Esophagus muscularis mucosa (tissue), 4 donors: ENCODE measurements at regions of chr10 and their contacts with region 1.

Region 1: DNA sequence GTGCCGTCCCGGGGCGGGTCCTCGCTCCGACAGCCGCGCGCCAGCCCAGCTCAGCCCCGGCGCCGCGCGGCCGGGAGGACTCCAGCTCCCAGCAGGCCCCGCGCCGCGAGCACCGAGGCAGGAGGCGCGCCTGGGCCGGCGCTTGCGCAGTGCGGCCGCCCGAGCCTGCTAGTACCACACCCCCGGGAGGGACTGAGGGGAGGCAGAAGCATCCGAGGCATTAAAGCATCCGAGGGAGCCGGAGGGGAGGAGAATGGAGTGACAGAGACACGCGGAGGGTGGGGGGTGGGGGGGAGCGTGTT is at the start of gene GRK5:
- DNase-seq: peak; percentile 97
- H3K4me3 ChIP-seq: peak within 1 kb of the TSS; percentile 74 to 95 (median 83)
- H3K27ac ChIP-seq: peak within 1 kb of the TSS; percentile 97 to 100 (median 98)
- H3K4me1 ChIP-seq: peaks cover 33 to 52% (median 50%) of the 10 kb centered on the region in 4 donors
- H3K27me3 ChIP-seq: no peaks in the 10 kb centered on the region
- CTCF ChIP-seq: no peak
- EP300 ChIP-seq: no peak
- POLR2A ChIP-seq: no peak
- total RNA-seq, gene GRK5: 39.6 to 64.4 (median 50.7) TPM

Region 2: GRCh38 chr10:118800920-118801319 is 406.4 kb before region 1 on chr10:
- intact Hi-C with region 1: no loop called
- DNase-seq: no peak
- H3K4me3 ChIP-seq: no peak overlapping the region
- H3K27ac ChIP-seq: no peak overlapping the region
- H3K4me1 ChIP-seq: peaks cover 0 to 25% (median 11%) of the 10 kb centered on the region in 4 donors
- H3K27me3 ChIP-seq: no peaks in the 10 kb centered on the region
- CTCF ChIP-seq: peak; percentile 42 to 52 (median 50)
- EP300 ChIP-seq: no peak
- POLR2A ChIP-seq: no peak

Region 3: GRCh38 chr10:119253433-119254174 is 46.3 kb after region 1 on chr10:
- intact Hi-C with region 1: loop called (anchors 5 kb)
- DNase-seq: no peak
- H3K4me3 ChIP-seq: no peak overlapping the region
- H3K27ac ChIP-seq: peak overlapping the region; percentile 81 to 89 (median 84)
- H3K4me1 ChIP-seq: peaks cover 69 to 84% (median 82%) of the 10 kb centered on the region in 4 donors
- H3K27me3 ChIP-seq: no peaks in the 10 kb centered on the region
- CTCF ChIP-seq: peak in 2 of 3 experiments; percentile 14 to 27
- EP300 ChIP-seq: no peak
- POLR2A ChIP-seq: no peak

Region 4: DNA sequence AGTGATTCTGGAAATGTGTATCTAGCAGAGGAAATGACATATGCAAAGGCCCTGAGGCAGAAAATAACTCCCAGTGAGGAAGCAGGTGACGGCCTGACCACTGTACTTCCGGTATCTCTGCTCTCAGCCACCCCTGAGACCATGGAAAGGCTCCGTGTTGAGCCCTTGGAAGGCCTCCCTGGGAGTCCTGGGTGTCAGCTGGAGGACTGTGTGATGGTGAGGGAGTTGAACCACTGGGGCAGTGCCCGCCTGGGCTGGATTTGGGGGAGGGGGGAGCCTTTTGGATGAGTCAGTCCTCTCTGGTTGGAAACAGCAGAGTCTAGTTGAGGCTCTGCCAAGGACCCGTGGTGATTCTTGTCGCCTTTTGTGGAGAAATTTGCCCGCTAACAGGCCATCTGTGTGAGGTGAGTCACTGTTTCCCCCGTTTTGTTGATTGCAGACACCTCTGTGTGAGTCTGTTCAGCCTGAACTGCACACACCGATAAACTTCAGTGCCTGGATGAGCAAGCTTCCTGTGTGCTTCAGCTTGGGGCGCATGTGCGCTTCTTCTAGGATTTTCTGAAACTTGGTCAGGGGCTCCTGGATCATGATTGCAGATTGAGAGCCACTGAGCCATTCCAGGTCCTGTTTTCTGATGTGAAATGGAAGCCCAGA is 98.7 kb after region 1 on chr10:
- intact Hi-C with region 1: loop called (anchors 5 kb)
- DNase-seq: peak; percentile 96
- H3K4me3 ChIP-seq: no peak overlapping the region
- H3K27ac ChIP-seq: peak overlapping the region; percentile 82 to 84 (median 84)
- H3K4me1 ChIP-seq: peaks cover 65 to 100% (median 96%) of the 10 kb centered on the region in 4 donors
- H3K27me3 ChIP-seq: no peaks in the 10 kb centered on the region
- CTCF ChIP-seq: no peak
- EP300 ChIP-seq: no peak
- POLR2A ChIP-seq: no peak

Region 5: DNA sequence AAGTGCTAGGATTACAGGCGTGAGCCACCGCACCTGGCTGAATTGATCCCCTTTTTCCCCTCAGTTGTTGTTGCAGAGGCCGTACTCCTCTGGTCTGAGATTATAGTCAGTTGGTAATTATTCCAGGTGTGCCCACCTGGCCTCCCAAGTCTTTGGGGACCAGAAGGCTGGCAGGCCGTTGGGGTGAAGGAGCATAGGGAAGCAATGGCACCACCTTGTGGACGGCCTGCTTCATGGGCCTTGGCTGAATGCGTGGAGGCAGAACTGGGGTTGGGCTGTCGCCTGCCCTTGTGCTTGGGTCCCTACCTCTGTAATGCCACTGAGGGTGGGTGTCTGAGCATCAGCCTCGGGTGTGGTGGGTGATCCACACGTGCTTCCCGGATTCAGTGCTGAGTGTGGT is 209.5 kb after region 1 on chr10:
- intact Hi-C with region 1: loop called (anchors 2 kb)
- DNase-seq: no peak
- H3K4me3 ChIP-seq: no peak overlapping the region
- H3K27ac ChIP-seq: peak overlapping the region in 2 of 4 donors; percentile 17 to 78
- H3K4me1 ChIP-seq: peaks cover 45 to 63% (median 54%) of the 10 kb centered on the region in 4 donors
- H3K27me3 ChIP-seq: no peaks in the 10 kb centered on the region
- CTCF ChIP-seq: peak; percentile 69 to 75 (median 74)
- EP300 ChIP-seq: no peak
- POLR2A ChIP-seq: no peak

Region 6: GRCh38 chr10:119670717-119671116 is 463.4 kb after region 1 on chr10:
- intact Hi-C with region 1: loop called (anchors 10 kb)
- DNase-seq: no peak
- H3K4me3 ChIP-seq: no peak overlapping the region
- H3K27ac ChIP-seq: no peak overlapping the region
- H3K4me1 ChIP-seq: peaks cover 39 to 53% (median 50%) of the 10 kb centered on the region in 4 donors
- H3K27me3 ChIP-seq: no peaks in the 10 kb centered on the region
- CTCF ChIP-seq: no peak
- EP300 ChIP-seq: no peak
- POLR2A ChIP-seq: no peak